Esophagus muscularis mucosa (tissue), 4 donors: ENCODE measurements at regions of chr21 and their contacts with region 1.

Region 1: DNA sequence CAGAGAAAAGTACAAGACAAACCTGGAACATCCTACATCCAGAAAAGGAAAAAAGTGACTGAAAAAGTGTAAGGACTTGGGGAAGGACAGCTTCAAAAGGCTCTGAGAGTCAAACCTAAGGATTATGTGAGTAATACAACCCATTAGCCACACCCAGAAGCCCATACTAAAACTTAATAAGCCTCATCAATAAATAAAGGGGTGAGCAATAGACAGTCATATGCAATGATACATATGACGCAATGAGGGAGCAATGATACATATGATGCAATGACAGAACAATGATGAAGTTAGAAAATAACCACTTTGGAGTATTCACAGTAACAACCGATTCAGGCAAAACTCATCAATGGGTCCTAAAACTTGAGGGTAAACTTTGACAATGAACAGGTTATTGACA is 50.1 kb downstream of the BRWD1 start:
- DNase-seq: no peak
- H3K4me3 ChIP-seq: no peak overlapping the region
- H3K27ac ChIP-seq: no peak overlapping the region
- H3K4me1 ChIP-seq: no peaks in the 10 kb centered on the region
- H3K27me3 ChIP-seq: no peaks in the 10 kb centered on the region
- CTCF ChIP-seq: no peak
- EP300 ChIP-seq: no peak
- POLR2A ChIP-seq: no peak

Region 2: DNA sequence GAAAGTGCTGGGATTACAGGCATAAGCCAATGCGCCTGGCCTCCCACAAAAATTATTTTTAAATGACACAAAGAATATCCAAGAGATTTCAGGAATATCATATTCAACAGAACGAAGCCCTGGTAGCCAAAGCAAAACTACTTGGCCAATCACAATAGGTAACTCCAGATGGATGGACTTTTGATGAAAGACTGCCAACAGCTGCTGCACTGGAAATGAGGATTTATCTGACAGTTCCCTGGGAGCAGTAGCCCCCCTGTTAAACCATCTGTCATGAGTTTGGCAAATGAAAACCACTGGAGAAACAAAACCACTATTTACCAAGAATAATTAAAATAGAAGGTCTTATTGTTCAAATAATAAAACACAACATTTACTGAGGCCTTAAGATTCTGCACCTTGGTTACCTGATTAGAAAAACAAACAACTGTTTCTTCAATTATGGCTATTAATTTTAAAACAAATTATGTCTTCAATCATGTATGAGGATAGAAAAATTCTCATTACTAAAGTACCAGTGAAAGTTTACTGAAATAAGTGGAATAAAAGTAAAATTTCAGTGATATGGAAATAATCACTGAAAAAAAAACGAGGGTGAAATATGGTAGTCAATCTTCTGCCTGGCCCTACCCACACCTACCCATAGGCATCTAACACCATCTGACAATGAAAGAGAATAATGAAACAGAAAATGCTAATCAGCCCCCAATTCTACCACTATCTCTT is 45.9 kb before region 1 on chr21:
- intact Hi-C with region 1: loop called (anchors 10 kb)
- DNase-seq: no peak
- H3K4me3 ChIP-seq: no peak overlapping the region
- H3K27ac ChIP-seq: no peak overlapping the region
- H3K4me1 ChIP-seq: no peaks in the 10 kb centered on the region
- H3K27me3 ChIP-seq: no peaks in the 10 kb centered on the region
- CTCF ChIP-seq: no peak
- EP300 ChIP-seq: no peak
- POLR2A ChIP-seq: no peak